ENCODE measurements at regions of chr5 and their contacts with region 1.

Region 1: GRCh38 chr5:6820851-6821479 is 107.7 kb downstream of the TENT4A start:
- DNase-seq: peak; percentile 80 to 89 (median 88)
- ATAC-seq: peak; percentile 97
- H3K4me3 ChIP-seq: no peak overlapping the region
- H3K27ac ChIP-seq: no peak overlapping the region
- H3K4me1 ChIP-seq: peaks cover 0 to 4% of the 10 kb centered on the region in 2 experiments; a peak in 1 of 5 replicates
- H3K27me3 ChIP-seq: no peaks in the 10 kb centered on the region; a peak in 1 of 5 replicates
- CTCF ChIP-seq: peak; percentile 96 to 99 (median 99)
- EP300 ChIP-seq: no peak
- POLR2A ChIP-seq: no peak
- RAD21 ChIP-seq: peak; percentile 82 to 84

Region 2: GRCh38 chr5:6765612-6766525 is 55.1 kb before region 1 on chr5:
- CTCF ChIA-PET with region 1: no interaction called
- POLR2A ChIA-PET with region 1: no interaction called
- in situ Hi-C with region 1: no loop called
- intact Hi-C with region 1: loop called (anchors 5 kb)
- DNase-seq: peak; percentile 81 to 86 (median 84)
- ATAC-seq: peak; percentile 93
- H3K4me3 ChIP-seq: no peak overlapping the region
- H3K27ac ChIP-seq: no peak overlapping the region
- H3K4me1 ChIP-seq: peaks cover 0 to 14% of the 10 kb centered on the region in 2 experiments; a peak in 2 of 5 replicates
- H3K27me3 ChIP-seq: peaks cover 17 to 48% of the 10 kb centered on the region in 2 experiments; a peak in 4 of 5 replicates
- CTCF ChIP-seq: peak; percentile 89 to 92 (median 91)
- EP300 ChIP-seq: no peak
- POLR2A ChIP-seq: no peak
- RAD21 ChIP-seq: peak; percentile 44 to 83

Region 3: DNA sequence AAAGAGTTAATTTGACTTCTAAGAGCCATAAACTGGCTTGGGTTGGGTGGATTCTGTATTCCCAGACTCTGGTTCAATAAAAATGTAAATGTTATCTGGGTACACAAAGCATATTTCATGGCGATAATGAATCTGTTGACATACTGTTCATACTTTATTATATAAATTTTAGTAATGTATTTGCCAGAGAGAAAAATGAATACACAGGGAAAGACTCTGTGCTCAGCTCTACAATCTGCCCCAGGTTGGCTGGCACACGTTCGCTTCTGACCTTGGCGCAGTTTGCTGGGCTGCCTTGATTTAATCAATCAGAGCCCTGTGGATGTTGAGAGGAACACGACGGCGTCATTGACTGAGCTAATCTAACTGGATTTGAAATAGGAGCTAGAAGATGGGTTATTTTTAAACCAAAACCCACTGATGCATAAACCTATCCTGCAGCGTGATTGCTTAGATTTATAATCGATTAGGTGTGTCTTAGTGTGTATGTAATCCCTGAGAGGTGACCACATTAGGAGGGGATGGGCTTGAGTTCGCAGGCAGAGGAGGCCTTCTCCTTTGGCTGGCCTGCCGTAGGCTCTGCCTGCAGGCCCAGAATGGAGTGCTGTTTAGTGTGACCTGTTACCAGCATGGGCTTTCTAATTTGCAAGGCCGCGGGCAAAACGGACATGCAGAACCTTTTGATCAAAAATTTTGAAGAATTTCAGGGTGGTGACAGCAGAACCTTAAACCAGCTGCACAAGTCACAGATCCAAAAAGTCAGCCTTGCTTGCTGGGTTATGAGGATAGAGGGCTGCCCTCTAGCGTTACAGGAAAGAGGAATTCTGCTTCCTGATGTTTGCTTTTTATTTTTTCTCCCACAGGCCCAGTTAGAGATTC is 571.1 kb after region 1 on chr5:
- CTCF ChIA-PET with region 1: interaction called, 4 read pairs
- POLR2A ChIA-PET with region 1: no interaction called
- in situ Hi-C with region 1: no loop called
- intact Hi-C with region 1: loop called (anchors 5 kb)
- DNase-seq: peak in 2 of 4 experiments; percentile 22 to 34
- ATAC-seq: peak; percentile 71
- H3K4me3 ChIP-seq: no peak overlapping the region
- H3K27ac ChIP-seq: no peak overlapping the region
- H3K4me1 ChIP-seq: peaks cover 0 to 10% of the 10 kb centered on the region in 2 experiments; a peak in 1 of 5 replicates
- H3K27me3 ChIP-seq: peaks cover 0 to 20% of the 10 kb centered on the region in 2 experiments; a peak in 2 of 5 replicates
- CTCF ChIP-seq: peak; percentile 48 to 63 (median 52)
- EP300 ChIP-seq: no peak
- POLR2A ChIP-seq: no peak
- RAD21 ChIP-seq: peak; percentile 37 to 59

Region 4: GRCh38 chr5:7754992-7755596 is 934.1 kb after region 1 on chr5:
- CTCF ChIA-PET with region 1: interaction called, 3 read pairs
- POLR2A ChIA-PET with region 1: no interaction called
- in situ Hi-C with region 1: loop called (anchors 10 kb)
- intact Hi-C with region 1: no loop called
- DNase-seq: peak; percentile 70 to 78 (median 77)
- ATAC-seq: peak; percentile 99
- H3K4me3 ChIP-seq: no peak overlapping the region
- H3K27ac ChIP-seq: no peak overlapping the region
- H3K4me1 ChIP-seq: no peaks in the 10 kb centered on the region
- H3K27me3 ChIP-seq: peaks cover 0 to 9% of the 10 kb centered on the region in 2 experiments; a peak in 1 of 5 replicates
- CTCF ChIP-seq: peak; percentile 89 to 96 (median 94)
- EP300 ChIP-seq: no peak
- POLR2A ChIP-seq: no peak
- RAD21 ChIP-seq: peak; percentile 72 to 87